H1 (cell line): ENCODE measurements at regions of chr16 and their contacts with region 1.

Region 1: GRCh38 chr16:30984669-30985400 is at the start of gene HSD3B7:
- DNase-seq: peak; percentile 74 to 100
- H3K4me3 ChIP-seq: peak within 1 kb of the TSS in 3 of 4 experiments; percentile 20 to 50 (median 40); a peak in 5 of 8 replicates
- H3K27ac ChIP-seq: no peak within 1 kb of the TSS
- H3K4me1 ChIP-seq: peaks cover 0 to 5% (median 2%) of the 10 kb centered on the region in 4 experiments; a peak in 4 of 7 replicates
- H3K27me3 ChIP-seq: no peaks in the 10 kb centered on the region
- CTCF ChIP-seq: peak; percentile 88 to 96 (median 94)
- EP300 ChIP-seq: no peak
- POLR2A ChIP-seq: peak in 1 of 2 experiments; percentile 60; a peak in 2 of 3 replicates
- RAD21 ChIP-seq: peak; percentile 79 to 84
- total RNA-seq, gene HSD3B7: 2.9 and 3.1 TPM in 2 replicates

Region 2: GRCh38 chr16:30902029-30902972 is 82.5 kb before region 1 on chr16:
- CTCF ChIA-PET with region 1: no interaction called
- POLR2A ChIA-PET with region 1: no interaction called
- DNase-seq: peak in 1 of 2 experiments; percentile 81
- H3K4me3 ChIP-seq: peak overlapping the region; percentile 42 to 67 (median 53)
- H3K27ac ChIP-seq: peak overlapping the region; percentile 18; the same call in 1 of the 2 replicates
- H3K4me1 ChIP-seq: peaks cover 2 to 5% (median 4%) of the 10 kb centered on the region in 4 experiments; a peak in 5 of 7 replicates
- H3K27me3 ChIP-seq: peaks cover 0 to 19% (median 3%) of the 10 kb centered on the region in 4 experiments; a peak in 4 of 7 replicates
- CTCF ChIP-seq: peak; percentile 43 to 72 (median 69)
- EP300 ChIP-seq: 0 out of 3 replicates have a peak, but pooled peaks of 1 of the 2 experiments have one; percentile 8
- POLR2A ChIP-seq: no peak
- RAD21 ChIP-seq: peak in 1 of 2 experiments; percentile 51; a peak in 2 of 4 replicates

Region 3: DNA sequence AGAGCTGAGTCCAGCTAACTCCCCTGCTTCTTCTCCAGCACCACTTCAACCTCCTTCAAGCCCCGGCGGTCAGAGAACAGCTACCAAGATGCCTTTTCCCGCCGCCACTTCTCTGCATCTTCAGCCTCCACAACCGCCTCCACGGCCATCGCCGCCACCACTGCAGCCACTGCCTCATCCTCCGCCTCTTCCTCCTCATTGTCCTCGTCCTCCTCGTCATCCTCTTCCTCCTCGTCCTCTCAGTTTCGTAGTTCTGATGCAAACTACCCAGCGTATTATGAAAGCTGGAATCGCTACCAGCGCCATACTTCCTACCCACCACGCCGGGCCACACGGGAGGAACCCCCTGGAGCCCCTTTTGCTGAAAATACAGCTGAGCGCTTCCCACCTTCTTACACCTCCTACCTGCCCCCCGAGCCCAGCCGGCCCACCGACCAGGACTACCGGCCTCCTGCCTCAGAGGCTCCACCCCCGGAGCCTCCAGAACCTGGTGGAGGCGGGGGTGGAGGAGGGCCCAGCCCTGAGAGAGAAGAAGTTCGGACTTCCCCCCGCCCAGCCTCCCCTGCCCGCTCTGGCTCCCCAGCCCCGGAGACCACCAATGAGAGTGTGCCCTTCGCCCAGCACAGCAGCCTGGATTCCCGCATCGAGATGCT is 20.1 kb before region 1 on chr16:
- CTCF ChIA-PET with region 1: interaction called, 22 read pairs
- POLR2A ChIA-PET with region 1: interaction called, 45 read pairs
- DNase-seq: no peak
- H3K4me3 ChIP-seq: no peak overlapping the region
- H3K27ac ChIP-seq: no peak overlapping the region
- H3K4me1 ChIP-seq: no peaks in the 10 kb centered on the region
- H3K27me3 ChIP-seq: no peaks in the 10 kb centered on the region
- CTCF ChIP-seq: no peak
- EP300 ChIP-seq: no peak
- POLR2A ChIP-seq: no peak
- RAD21 ChIP-seq: no peak

Region 4: GRCh38 chr16:31002250-31002700 is 17.4 kb after region 1 on chr16:
- CTCF ChIA-PET with region 1: interaction called, 27 read pairs
- POLR2A ChIA-PET with region 1: interaction called, 20 read pairs
- DNase-seq: no peak
- H3K4me3 ChIP-seq: no peak overlapping the region
- H3K27ac ChIP-seq: no peak overlapping the region
- H3K4me1 ChIP-seq: peaks cover 0 to 8% (median 6%) of the 10 kb centered on the region in 4 experiments; a peak in 5 of 7 replicates
- H3K27me3 ChIP-seq: no peaks in the 10 kb centered on the region; a peak in 1 of 7 replicates
- CTCF ChIP-seq: no peak
- EP300 ChIP-seq: no peak
- POLR2A ChIP-seq: no peak
- RAD21 ChIP-seq: no peak

Region 5: DNA sequence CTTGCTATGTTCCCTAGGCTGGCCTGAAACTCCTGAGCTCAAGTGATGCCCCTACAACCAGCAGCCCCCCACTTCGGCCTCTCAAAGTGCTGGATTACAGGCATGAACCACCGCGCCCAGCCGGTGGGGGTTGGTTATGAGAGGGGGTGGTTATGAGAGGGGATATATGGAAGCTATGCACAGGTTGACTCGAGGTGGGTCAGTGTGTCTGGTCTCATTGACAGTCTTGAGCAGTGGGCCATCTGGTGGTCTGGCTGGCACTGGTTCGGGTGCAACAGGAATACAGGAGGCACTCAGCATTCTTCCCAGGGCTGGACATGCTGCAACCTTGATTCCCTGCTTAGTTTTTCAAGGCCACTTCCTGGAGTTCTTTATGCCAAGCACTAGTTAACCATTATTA is 31.2 kb after region 1 on chr16:
- CTCF ChIA-PET with region 1: interaction called, 16 read pairs
- POLR2A ChIA-PET with region 1: interaction called, 5 read pairs
- DNase-seq: no peak
- H3K4me3 ChIP-seq: no peak overlapping the region
- H3K27ac ChIP-seq: no peak overlapping the region
- H3K4me1 ChIP-seq: no peaks in the 10 kb centered on the region; a peak in 1 of 7 replicates
- H3K27me3 ChIP-seq: no peaks in the 10 kb centered on the region; a peak in 2 of 7 replicates
- CTCF ChIP-seq: peak; percentile 17 to 49 (median 32); a peak in 3 of 4 replicates
- EP300 ChIP-seq: no peak
- POLR2A ChIP-seq: no peak
- RAD21 ChIP-seq: peak; percentile 25 to 43; a peak in 3 of 4 replicates

Region 6: GRCh38 chr16:31042866-31043265 is 58.0 kb after region 1 on chr16:
- CTCF ChIA-PET with region 1: interaction called, 30 read pairs
- POLR2A ChIA-PET with region 1: interaction called, 15 read pairs
- DNase-seq: no peak
- H3K4me3 ChIP-seq: peak overlapping the region; percentile 9 to 54 (median 40); a peak in 5 of 8 replicates
- H3K27ac ChIP-seq: no peak overlapping the region
- H3K4me1 ChIP-seq: peaks cover 0 to 3% (median 0%) of the 10 kb centered on the region in 4 experiments; a peak in 3 of 7 replicates
- H3K27me3 ChIP-seq: no peaks in the 10 kb centered on the region
- CTCF ChIP-seq: no peak
- EP300 ChIP-seq: no peak
- POLR2A ChIP-seq: no peak
- RAD21 ChIP-seq: no peak

Region 7: DNA sequence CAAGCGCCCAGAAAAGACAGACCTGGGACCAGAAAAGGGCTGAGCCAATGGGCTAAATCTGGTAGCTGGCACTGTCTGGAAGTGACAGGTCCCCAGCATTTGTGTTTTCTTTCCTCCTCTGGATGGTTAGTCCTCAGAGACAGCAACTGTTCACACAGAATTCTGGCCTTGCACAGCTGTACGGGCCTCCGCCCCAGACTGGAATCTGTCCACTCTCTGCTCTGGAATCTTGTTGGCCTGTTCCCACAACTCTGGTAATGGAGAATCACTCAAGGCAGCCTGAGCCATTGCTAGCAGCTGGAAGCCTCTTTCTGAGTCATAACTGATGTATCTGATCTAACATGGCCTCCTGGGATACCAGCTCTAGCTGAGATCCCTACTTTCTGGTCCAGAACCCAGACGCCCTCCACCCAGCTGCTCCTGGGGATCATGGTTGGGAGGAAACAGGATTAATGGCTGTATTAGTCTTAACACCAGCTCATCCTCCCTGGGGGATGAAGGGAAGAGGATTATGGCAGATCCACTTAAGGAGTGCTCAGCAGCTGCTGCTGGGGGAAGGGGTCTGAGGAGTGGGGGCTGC is 80.1 kb after region 1 on chr16:
- CTCF ChIA-PET with region 1: interaction called, 10 read pairs
- POLR2A ChIA-PET with region 1: interaction called, 4 read pairs
- DNase-seq: no peak
- H3K4me3 ChIP-seq: no peak overlapping the region
- H3K27ac ChIP-seq: no peak overlapping the region
- H3K4me1 ChIP-seq: no peaks in the 10 kb centered on the region
- H3K27me3 ChIP-seq: no peaks in the 10 kb centered on the region
- CTCF ChIP-seq: no peak
- EP300 ChIP-seq: no peak
- POLR2A ChIP-seq: no peak
- RAD21 ChIP-seq: no peak

Region 8: GRCh38 chr16:31142109-31143010 is 157.5 kb after region 1 on chr16:
- CTCF ChIA-PET with region 1: interaction called, 15 read pairs
- POLR2A ChIA-PET with region 1: interaction called, 5 read pairs
- DNase-seq: peak; percentile 98 to 99
- H3K4me3 ChIP-seq: peak overlapping the region; percentile 10 to 54 (median 24); a peak in 7 of 8 replicates
- H3K27ac ChIP-seq: peak overlapping the region; percentile 48; the same call in 1 of the 2 replicates
- H3K4me1 ChIP-seq: peaks cover 5 to 26% (median 22%) of the 10 kb centered on the region in 4 experiments
- H3K27me3 ChIP-seq: peaks cover 1 to 19% (median 12%) of the 10 kb centered on the region in 4 experiments
- CTCF ChIP-seq: peak; percentile 82 to 95 (median 87)
- EP300 ChIP-seq: 0 out of 3 replicates have a peak, but pooled peaks of 1 of the 2 experiments have one; percentile 45
- POLR2A ChIP-seq: no peak
- RAD21 ChIP-seq: peak; percentile 77 to 85